Stomach (tissue), 19 donors: ENCODE measurements at regions of chr2 and their contacts with region 1.

Region 1: DNA sequence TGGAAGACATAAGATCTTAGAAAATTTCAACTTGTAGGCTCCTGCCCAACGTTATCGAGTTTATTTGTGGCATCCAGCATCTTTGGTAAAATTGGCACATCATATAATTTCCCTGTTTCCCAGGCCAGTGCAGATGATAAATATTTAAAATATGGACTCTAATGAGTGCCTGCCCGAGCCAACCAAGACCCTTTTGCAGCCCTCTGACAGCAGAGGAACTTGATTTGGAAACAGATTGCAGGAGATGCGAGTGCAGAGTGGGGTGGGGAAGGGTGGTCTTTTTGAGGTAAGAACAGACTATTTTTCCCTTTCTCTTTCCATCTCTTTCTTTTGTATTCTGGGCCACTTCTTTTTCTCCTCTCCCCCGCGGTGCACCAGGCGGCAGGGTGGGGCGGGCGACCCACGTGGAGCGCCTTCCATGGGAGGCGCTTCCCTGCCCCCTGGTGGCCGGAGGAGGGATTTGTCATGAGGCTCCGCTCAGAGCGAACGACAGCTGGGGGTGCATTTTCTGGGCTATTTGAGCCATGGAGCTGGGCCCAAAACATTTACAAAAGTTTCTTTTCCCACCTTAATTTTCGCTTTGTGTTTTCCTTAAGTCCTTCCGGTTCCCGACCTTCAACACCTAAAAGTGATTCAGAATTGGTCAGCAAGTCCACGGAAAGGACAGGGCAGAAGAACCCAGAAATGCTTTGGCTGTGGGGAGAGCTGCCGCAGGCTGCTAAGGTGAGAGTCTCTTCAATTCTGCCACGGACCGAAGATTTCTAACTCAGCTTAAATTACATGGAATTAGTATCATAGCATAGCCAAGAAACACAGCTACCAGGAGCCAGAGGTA is 32.7 kb downstream of the LPIN1 start:
- DNase-seq: peak; percentile 80 to 88
- H3K4me3 ChIP-seq: peak overlapping the region in 2 of 4 donors; percentile 17 to 18
- H3K27ac ChIP-seq: no peak overlapping the region
- H3K4me1 ChIP-seq: peaks cover 8 to 38% (median 20%) of the 10 kb centered on the region in 4 donors
- H3K27me3 ChIP-seq: no peaks in the 10 kb centered on the region
- CTCF ChIP-seq: peak in 6 of 7 experiments; percentile 73 to 99 (median 96)
- EP300 ChIP-seq: no peak
- POLR2A ChIP-seq: no peak

Region 2: GRCh38 chr2:11692966-11693521 is 86.1 kb before region 1 on chr2:
- intact Hi-C with region 1: loop called (anchors 5 kb)
- DNase-seq: peak; percentile 74 to 90
- H3K4me3 ChIP-seq: no peak overlapping the region
- H3K27ac ChIP-seq: no peak overlapping the region
- H3K4me1 ChIP-seq: peaks cover 20 to 35% (median 26%) of the 10 kb centered on the region in 4 donors
- H3K27me3 ChIP-seq: no peaks in the 10 kb centered on the region
- CTCF ChIP-seq: peak in 4 of 7 experiments; percentile 49 to 84 (median 72)
- EP300 ChIP-seq: no peak
- POLR2A ChIP-seq: no peak

Region 3: DNA sequence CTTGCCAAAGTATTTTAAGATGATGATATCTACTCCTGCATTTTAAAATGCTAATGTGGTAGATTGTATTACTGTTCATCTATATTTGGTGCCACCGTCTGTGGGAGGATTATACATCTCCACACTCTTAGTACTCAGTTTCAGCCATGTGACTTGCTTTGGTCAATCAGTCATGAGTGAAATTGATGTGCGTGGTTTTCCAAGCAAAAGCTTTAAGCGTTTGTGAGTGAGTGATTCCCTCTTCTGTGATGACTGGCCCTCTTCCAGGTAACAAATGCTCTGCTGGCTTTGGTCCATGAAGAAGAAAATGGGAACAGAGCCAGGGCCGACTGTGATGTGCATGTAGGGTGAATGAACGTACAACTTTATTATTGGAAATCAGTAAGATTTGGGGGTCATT is 297.7 kb after region 1 on chr2:
- intact Hi-C with region 1: no loop called
- DNase-seq: peak in 1 of 2 donors; percentile 58
- H3K4me3 ChIP-seq: no peak overlapping the region
- H3K27ac ChIP-seq: no peak overlapping the region
- H3K4me1 ChIP-seq: no peaks in the 10 kb centered on the region
- H3K27me3 ChIP-seq: no peaks in the 10 kb centered on the region
- CTCF ChIP-seq: no peak
- EP300 ChIP-seq: no peak
- POLR2A ChIP-seq: no peak